Activated naive CD4-positive, alpha-beta T cell treated with anti-CD3 and anti-CD28 coated beads, Interleukin-2, amount 10 ng/mL, durations not matched to agents 7 days and 5 days (primary cell): ENCODE measurements at regions of chr9 and their contacts with region 1.

Region 1: DNA sequence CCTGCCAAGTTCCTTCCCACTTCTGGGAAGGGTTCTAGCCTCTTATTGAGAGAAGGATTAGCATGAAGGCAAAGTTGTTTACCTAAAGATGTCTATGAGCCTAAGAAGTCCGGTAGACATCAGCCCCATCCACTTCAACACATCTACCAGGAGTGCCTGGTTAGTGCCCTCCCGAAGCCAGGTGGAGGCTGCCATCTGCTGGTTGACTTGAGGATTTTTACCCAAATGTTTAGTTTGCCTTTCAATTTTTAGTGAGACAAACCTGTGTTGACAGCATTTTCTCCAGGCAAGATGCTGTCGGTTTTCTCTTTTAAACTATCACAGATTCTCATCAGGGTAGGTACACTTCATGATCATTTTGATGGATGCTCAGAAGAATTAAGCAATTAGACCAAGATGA is 83.6 kb upstream of the TNFSF8 start:
- DNase-seq: peak; percentile 89
- H3K4me3 Mint-ChIP-seq: no peak overlapping the region
- H3K27ac Mint-ChIP-seq: peak overlapping the region; percentile 76
- H3K4me1 Mint-ChIP-seq: peaks cover 46% of the 10 kb centered on the region
- H3K27me3 Mint-ChIP-seq: peaks cover 13% of the 10 kb centered on the region

Region 2: GRCh38 chr9:114914139-114914538 is 99.9 kb before region 1 on chr9:
- CTCF ChIA-PET with region 1: interaction called, 126 read pairs
- DNase-seq: no peak
- H3K4me3 Mint-ChIP-seq: no peak overlapping the region
- H3K27ac Mint-ChIP-seq: peak overlapping the region; percentile 8
- H3K4me1 Mint-ChIP-seq: peaks cover 93% of the 10 kb centered on the region
- H3K27me3 Mint-ChIP-seq: no peaks in the 10 kb centered on the region

Region 3: DNA sequence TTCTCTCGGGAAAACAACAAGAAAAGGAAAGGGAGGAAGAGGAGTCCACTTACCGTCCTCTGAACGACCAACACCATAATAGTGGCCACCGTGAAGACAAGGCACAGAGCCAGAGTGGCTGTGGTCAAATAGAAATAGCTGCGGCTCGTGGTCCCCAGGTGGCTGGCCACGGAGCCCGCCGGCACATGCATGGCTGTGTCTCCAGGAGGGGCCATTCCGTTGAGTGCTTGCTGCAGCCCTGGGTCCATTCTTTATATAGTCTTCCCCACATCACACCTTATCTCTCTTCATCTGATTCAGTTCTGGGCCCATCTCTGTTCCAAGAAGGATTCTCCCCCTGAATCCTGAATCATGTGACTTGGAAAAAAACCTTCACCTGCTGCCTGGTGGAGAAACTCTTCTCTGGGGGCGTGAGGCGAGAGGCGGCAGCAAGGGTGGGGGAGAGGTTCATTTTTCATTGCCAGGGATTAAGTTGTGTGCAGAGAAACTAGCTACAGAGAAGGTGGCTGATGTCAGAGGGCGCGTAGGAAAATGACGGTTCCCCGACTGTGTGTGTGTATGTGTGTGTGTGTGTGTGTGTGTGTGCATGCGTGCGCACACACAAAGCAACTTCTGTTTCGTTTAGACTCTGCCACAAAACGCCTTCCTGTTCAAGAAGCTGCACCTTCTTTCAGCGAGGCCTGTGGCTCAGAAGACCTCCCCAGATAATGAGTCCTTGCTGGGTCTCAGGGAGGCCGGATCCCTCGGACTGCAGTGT is 83.8 kb before region 1 on chr9 and contains the start of gene TNFSF8:
- CTCF ChIA-PET with region 1: interaction called, 19 read pairs
- DNase-seq: peak; percentile 87
- H3K4me3 Mint-ChIP-seq: peak within 1 kb of the TSS; percentile 97
- H3K27ac Mint-ChIP-seq: peak within 1 kb of the TSS; percentile 98
- H3K4me1 Mint-ChIP-seq: peaks cover 43% of the 10 kb centered on the region
- H3K27me3 Mint-ChIP-seq: no peaks in the 10 kb centered on the region

Region 4: DNA sequence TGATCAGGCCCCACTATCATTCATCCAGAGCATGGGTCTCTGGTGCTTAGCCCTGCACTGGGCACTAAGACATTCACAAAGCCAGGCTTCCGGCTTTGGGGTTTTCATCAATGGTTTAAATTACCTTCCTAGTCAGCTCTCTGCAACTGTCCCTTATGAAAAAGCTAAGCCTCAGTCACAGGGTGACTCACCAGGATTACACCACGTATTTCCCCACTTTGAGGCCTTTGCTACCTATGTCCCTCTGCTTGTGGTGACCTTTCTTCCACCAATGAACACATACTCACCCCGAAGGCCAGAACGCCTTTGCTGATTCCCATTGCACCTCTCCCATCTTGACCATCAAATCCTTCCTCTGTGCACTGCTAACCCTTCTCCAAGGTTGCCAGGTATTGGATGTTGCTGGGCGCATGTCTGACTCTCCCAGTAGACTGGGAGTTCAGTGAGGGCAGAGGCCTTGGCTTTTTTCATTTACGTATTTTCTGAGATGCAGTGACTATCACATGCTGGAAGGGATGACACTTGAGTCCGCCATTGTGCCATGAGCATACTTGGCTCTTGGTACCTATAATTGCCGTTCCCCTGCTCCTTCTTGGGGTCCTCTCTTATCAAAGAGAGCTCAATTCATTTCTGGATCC is 24.9 kb before region 1 on chr9:
- CTCF ChIA-PET with region 1: interaction called, 12 read pairs
- DNase-seq: peak; percentile 26
- H3K4me3 Mint-ChIP-seq: peak overlapping the region; percentile 11
- H3K27ac Mint-ChIP-seq: peak overlapping the region; percentile 89
- H3K4me1 Mint-ChIP-seq: peaks cover 45% of the 10 kb centered on the region
- H3K27me3 Mint-ChIP-seq: peaks cover 2% of the 10 kb centered on the region